ENCODE measurements at regions of chr2 and their contacts with region 1.

Region 1: GRCh38 chr2:233251306-233252116 is at the start of gene ATG16L1:
- DNase-seq: peak; percentile 93
- H3K4me3 ChIP-seq: peak within 1 kb of the TSS; percentile 94
- H3K4me3 Mint-ChIP-seq: peak within 1 kb of the TSS; percentile 81
- H3K27ac Mint-ChIP-seq: peak within 1 kb of the TSS; percentile 42
- H3K4me1 ChIP-seq: peaks cover 8% of the 10 kb centered on the region; the same call in 1 of the 2 replicates
- H3K4me1 Mint-ChIP-seq: peaks cover 12% of the 10 kb centered on the region
- H3K27me3 ChIP-seq: no peaks in the 10 kb centered on the region
- H3K27me3 Mint-ChIP-seq: no peaks in the 10 kb centered on the region
- CTCF ChIP-seq: peak; percentile 60 to 94
- total RNA-seq, gene ATG16L1: 20.1 and 24.4 TPM in 2 replicates

Region 2: DNA sequence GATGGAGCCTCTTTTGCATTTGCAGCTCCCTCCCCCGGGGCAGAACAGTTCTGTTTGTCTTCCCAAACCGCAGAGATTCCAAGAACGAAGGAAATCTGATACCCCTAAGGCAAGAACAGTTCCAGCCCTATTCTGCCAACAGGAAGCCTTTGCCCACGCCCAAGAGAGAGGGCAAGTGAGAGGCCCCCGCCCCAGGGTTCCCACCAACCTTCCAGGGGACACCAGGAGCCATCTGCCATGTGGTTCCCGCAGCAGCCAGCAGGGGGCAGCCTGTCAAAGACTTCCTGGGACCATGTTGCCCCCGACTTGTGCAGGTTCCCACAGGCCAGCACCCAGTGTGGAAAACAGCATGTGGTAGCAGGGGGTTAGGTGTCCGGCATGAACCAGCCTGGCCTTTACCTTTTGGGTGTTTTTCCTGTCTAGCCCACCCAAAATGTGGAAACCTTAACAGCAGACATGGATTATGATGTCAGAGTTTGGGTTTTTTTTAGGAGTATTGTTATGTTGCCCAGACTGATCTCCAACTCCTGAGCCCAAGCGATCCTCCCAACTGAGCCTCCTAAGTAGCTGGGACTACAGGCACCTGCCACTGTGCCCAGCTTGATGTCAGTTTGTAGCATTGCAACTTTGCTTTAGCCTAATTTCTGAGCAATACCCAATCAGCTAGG is 639.8 kb before region 1 on chr2:
- CTCF ChIA-PET with region 1: no interaction called
- POLR2A ChIA-PET with region 1: no interaction called
- intact Hi-C with region 1: loop called (anchors 5 kb)
- DNase-seq: peak; percentile 53 to 58
- H3K4me3 ChIP-seq: no peak overlapping the region
- H3K4me3 Mint-ChIP-seq: no peak overlapping the region
- H3K27ac Mint-ChIP-seq: no peak overlapping the region
- H3K4me1 ChIP-seq: no peaks in the 10 kb centered on the region
- H3K4me1 Mint-ChIP-seq: no peaks in the 10 kb centered on the region
- H3K27me3 ChIP-seq: no peaks in the 10 kb centered on the region
- H3K27me3 Mint-ChIP-seq: no peaks in the 10 kb centered on the region
- CTCF ChIP-seq: peak; percentile 66 to 75

Region 3: GRCh38 chr2:232910376-232910775 is 341.1 kb before region 1 on chr2:
- CTCF ChIA-PET with region 1: no interaction called
- POLR2A ChIA-PET with region 1: no interaction called
- intact Hi-C with region 1: no loop called
- DNase-seq: no peak
- H3K4me3 ChIP-seq: no peak overlapping the region
- H3K4me3 Mint-ChIP-seq: no peak overlapping the region
- H3K27ac Mint-ChIP-seq: no peak overlapping the region
- H3K4me1 ChIP-seq: no peaks in the 10 kb centered on the region
- H3K4me1 Mint-ChIP-seq: no peaks in the 10 kb centered on the region
- H3K27me3 ChIP-seq: no peaks in the 10 kb centered on the region; the same call in 1 of the 2 replicates
- H3K27me3 Mint-ChIP-seq: peaks cover 3% of the 10 kb centered on the region
- CTCF ChIP-seq: no peak

Region 4: GRCh38 chr2:233353769-233354499 is 102.4 kb after region 1 on chr2 and contains the start of gene DGKD:
- CTCF ChIA-PET with region 1: no interaction called
- POLR2A ChIA-PET with region 1: interaction called, 12 read pairs
- intact Hi-C with region 1: no loop called
- DNase-seq: peak; percentile 88 to 93
- H3K4me3 ChIP-seq: peak within 1 kb of the TSS; percentile 83
- H3K4me3 Mint-ChIP-seq: peak within 1 kb of the TSS; percentile 71
- H3K27ac Mint-ChIP-seq: peak within 1 kb of the TSS; percentile 68
- H3K4me1 ChIP-seq: peaks cover 66% of the 10 kb centered on the region
- H3K4me1 Mint-ChIP-seq: peaks cover 40% of the 10 kb centered on the region
- H3K27me3 ChIP-seq: no peaks in the 10 kb centered on the region
- H3K27me3 Mint-ChIP-seq: no peaks in the 10 kb centered on the region
- CTCF ChIP-seq: peak in 1 of 2 experiments; percentile 30
- total RNA-seq, gene DGKD: 105 and 108 TPM in 2 replicates

Measured in Caco-2 (cell line).